ENCODE measurements at regions of chr13 and their contacts with region 1.

Region 1: GRCh38 chr13:36453516-36453915 is 21.2 kb downstream of the CCNA1 start:
- DNase-seq: no peak
- ATAC-seq: no peak
- H3K4me3 Mint-ChIP-seq: no peak overlapping the region
- H3K27ac Mint-ChIP-seq: no peak overlapping the region
- H3K4me1 Mint-ChIP-seq: no peaks in the 10 kb centered on the region
- H3K27me3 Mint-ChIP-seq: no peaks in the 10 kb centered on the region
- CTCF ChIP-seq: no peak

Region 2: DNA sequence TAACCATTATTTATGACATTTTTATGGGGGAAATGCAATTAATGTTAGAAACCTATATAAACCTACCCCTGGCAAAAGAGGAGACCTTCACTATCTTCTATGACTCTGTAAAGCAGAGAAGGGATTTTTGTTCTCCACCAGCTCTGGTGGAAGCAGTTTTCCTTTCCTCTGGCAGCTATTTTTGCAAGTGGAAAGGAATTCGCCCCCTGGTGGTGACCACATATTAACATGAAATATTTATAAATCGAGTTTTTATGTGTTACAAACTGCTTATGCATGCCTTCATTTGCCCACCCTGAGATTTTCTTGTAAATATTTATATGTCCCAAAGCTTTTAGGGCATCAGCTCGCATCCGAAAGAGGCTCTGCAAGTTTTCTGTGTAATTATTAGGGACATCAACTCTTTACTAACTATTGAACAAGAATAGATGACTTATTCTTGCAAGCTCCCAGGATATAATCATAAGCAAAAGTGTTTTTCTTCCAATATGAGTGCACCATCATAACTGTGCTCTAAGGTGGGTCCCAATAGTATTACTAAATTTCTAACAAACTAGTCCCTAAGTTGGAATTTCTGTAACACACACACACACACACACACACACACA is 282.7 kb after region 1 on chr13:
- CTCF ChIA-PET with region 1: interaction called, 49 read pairs
- POLR2A ChIA-PET with region 1: no interaction called
- intact Hi-C with region 1: loop called (anchors 1 kb)
- DNase-seq: no peak
- ATAC-seq: no peak
- H3K4me3 Mint-ChIP-seq: no peak overlapping the region
- H3K27ac Mint-ChIP-seq: no peak overlapping the region
- H3K4me1 Mint-ChIP-seq: no peaks in the 10 kb centered on the region
- H3K27me3 Mint-ChIP-seq: no peaks in the 10 kb centered on the region
- CTCF ChIP-seq: peak; percentile 71